Right ventricle myocardium inferior (tissue), 1 donor: ENCODE measurements at regions of chr16 and their contacts with region 1.

Region 1: DNA sequence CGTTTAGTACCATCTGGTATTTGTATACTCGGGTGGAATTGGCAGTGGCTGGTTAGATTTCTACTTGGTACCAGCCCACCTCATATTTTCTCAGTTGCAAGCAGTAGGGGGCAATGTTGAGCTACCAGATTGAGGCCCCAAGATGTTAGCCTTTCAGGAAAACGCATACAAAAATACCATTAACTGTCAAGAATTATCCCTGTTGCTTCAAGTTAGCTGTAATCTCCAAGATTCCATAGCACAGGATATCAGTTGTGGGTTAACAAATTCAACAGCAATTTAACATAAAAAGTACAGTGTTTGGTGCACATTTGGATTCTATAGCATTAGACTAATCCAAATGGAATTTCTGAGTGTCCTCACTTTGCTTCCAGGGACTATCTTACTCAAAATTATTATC is 188.2 kb downstream of the FTO start:
- DNase-seq: no peak
- ATAC-seq: peak; percentile 60

Region 2: DNA sequence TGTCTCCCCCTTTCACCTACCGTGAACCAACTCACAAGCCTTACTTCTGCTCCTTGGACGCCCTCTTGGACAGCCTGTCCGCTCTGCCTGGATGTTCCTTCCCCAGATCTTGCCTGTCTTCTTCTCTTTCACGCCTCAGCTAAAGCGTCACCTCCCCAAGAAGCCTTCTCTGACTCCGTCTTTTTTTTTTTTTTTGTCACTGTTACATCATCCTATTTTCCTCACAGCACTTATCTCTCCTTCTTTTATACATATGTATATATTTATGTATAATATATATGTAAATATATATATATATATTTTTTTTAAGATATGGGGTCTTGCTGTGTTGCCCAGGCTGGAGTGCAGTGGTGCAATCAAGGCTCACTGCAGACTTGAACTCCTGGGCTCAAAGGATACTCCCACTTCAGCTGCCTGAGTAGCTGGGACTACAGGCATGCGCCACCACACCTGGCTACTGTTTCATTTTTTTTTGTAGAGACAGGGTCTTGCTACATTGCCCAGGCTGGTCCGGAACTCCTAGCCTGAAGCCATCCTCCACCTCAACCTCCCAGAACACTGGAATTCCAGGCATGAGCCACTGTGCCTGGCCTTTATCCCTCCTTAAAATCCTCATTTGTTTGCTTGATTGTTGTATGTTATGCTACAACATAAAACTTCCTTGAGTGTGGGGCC is 372.6 kb before region 1 on chr16:
- intact Hi-C with region 1: no loop called
- DNase-seq: no peak
- ATAC-seq: no peak

Region 3: DNA sequence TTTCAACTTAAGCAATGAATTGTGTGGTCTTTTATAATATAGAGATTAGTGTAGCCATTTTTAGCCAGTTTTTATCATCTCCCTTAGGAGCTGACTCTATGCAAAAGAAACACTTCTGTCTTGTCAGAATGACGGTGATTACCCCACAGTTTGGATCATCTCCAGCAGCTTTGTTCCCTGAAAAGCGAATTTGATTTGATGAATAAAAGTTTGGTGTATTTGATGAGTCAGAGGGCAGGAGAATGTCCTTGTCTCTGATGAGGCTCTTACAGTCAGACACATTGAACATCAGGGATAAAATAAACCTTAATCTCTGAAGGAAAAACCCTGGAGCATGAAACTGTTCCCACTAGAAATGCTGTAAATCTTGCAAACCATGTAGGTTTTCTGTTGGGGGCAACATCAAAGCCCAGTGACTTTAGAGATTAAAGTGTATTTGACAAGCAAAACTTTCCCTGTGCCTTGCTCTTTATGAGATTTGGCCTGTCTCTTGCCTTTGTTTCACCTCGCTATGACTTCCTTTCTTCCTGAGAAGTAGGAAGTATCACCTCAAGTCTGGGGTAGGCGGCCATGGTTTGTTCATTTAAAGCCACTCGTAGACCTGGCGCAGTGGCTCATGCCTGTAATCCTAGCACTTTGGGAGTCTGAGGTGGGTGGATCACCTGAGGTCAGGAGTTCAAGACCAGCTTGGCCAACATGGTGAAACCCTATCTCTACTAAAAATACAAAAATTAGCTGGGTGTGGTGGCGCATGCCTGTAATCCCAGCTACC is 21.1 kb after region 1 on chr16:
- intact Hi-C with region 1: no loop called
- DNase-seq: no peak
- ATAC-seq: peak; percentile 60

Region 4: DNA sequence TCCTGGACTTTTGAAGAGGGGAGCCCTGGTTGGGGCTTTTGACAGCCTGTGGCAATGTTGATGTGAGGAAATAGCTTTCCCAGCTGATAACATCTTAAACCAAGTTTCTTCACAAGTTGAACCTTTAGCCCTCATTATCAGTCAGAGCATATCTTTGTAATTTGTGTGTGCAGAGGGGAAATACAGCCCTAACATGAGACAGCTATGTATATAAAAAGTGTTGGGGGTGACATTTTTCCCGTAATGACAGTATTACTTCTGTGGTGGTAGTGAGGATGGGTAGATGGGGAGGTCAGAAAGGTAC is 32.9 kb after region 1 on chr16:
- intact Hi-C with region 1: no loop called
- DNase-seq: no peak
- ATAC-seq: no peak

Region 5: GRCh38 chr16:53952215-53953208 is 60.4 kb after region 1 on chr16:
- intact Hi-C with region 1: loop called (anchors 10 kb)
- DNase-seq: no peak
- ATAC-seq: peak; percentile 50

Region 6: DNA sequence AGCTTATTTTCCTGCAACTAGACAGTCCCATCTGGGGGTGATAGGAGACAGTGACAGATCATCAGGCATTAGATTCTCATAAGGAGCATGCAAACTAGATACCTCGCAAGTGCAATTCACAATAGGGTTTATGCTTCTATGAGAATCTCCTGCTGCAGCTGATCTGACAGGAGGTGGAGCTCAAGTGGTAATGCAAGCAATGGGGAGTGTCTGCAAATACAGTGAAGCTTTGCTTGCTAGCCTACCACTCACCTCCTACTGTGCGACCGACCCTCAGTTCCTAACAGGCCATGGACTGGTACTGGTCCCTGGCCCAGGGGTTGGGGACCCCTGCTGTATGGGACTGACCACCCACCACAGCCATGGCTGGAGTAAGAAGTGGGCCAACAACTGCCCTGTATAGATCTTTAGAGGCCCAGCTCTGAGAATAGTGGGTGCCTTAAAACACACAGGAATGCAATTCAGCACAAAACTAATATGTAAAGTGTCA is 420.4 kb after region 1 on chr16:
- intact Hi-C with region 1: no loop called
- DNase-seq: no peak
- ATAC-seq: no peak

Region 7: DNA sequence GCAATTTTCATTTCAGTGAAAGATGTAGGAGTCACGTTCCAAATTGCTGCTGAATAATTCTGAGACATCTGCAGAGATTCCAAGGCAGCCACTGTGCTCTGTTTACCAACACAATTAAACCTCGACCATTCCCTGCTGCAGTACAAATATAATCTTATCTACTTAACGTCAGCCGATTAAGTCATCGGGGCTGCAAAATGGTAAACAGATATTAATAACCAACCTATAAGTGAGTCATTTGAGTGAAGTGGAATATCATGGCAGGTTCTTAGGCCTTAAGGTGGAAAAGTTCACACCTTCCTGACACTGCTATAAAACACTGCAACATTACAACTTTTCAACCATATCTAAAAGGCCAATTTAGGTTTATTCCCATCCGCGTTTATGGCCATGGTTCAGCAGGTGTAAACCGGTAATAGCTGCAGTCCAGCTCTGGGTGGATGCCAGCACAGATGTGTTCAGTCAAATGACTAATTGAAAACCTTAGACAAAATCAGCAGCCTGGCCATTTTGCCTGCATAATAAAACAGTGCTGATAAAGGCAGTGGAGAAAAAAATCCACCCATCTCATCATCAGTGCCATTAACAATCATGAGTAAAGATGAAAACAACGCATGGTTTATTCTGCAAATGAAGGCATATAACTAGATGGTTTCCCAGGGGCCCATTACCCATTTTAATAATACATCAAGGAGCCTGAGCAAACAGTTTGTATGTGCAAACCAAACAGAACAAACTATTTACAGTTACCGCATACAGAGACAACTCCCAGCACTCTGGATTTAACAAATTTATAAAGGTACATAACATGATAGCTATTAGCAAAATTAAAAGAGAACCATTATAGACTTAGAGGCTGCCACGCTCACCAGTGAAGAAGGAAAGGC is 597.3 kb after region 1 on chr16:
- intact Hi-C with region 1: loop called (anchors 10 kb)
- DNase-seq: no peak
- ATAC-seq: peak; percentile 30